ENCODE measurements at regions of chr3 and their contacts with region 1.

Region 1: DNA sequence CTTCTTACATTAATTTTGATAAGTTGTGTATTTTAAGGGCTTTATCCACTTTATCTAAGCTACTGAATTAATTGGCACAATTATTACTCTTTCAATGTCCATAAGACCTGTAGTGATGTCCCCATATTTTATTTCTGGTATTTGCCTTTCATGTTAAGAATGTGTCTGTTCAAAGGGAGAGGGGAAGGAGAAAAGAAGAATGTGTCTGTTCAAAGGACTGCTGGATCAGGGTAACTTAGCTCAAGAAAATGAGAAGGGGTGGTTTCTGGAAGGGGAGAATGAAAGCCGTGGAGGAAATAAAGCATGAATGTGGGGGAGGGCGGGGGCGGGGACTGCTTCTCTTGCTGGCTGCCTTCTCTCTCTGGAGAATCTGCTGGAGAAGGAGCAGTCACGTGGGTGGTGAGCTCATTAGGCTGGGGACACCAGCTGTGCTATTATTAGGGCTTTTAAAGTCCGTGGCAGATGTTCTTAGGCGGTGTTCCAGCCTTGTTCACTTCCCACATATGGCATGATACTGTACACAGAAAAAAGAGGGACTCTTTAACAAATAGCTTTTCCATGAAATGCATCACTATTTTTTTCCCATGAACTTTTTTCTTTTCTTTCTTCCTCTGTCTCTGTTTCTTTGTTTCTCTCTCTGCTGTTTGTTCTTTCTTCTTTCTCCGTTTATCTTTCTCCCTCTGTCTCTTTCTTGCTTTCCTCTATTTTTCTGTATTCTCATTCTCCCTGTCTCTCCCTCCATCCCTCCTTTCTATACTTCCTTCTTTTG is 63.7 kb upstream of the ULK4 start:
- DNase-seq: peak; percentile 85 to 96 (median 95)
- ATAC-seq: peak; percentile 98
- H3K4me3 ChIP-seq: peak overlapping the region in 8 of 12 donors; percentile 1 to 40 (median 22)
- H3K27ac ChIP-seq: peak overlapping the region; percentile 59 to 94 (median 88)
- H3K4me1 ChIP-seq: peaks cover 16 to 89% (median 70%) of the 10 kb centered on the region in 12 donors
- H3K27me3 ChIP-seq: no peaks in the 10 kb centered on the region
- CTCF ChIP-seq: no peak
- POLR2A ChIP-seq: no peak

Region 2: DNA sequence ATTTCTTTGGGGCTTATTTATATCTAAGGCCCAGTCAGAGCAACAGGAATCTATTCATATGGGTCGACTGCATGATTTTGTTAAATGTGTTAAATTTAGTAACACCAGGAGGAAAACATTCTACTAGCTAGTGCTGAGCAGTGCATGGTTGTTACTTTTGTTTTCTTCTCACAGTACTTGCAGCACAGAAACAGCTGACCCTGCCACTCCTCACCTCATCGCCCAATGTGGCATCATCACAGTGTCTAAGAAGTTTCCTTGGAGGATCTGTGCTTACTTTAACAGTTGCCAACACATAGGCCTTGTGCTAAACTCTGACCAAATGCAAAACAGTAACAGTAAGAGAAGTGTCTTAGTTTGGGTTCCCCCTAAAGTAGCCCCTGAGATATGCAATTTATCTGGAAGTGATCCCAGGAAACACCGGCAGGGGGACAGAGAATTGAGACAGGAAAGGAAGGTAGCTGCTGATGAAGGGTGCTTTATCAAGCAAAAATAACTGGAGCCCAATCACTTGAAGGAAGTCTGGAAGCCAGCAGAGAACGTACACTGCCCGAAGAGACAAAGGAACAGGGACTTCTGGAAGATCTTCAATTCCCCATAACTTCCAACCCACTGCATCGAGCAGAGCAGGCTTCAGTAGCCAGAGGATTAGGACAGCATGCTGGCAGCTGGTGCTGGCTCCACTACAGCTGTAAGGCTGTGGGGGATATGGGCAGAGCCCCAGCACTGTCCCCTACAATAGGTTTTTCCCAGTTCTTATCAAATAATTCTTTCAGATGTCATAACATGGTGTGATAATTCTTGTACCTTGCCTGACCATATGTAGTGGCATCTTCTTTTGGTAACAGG is 27.6 kb before region 1 on chr3:
- intact Hi-C with region 1: no loop called
- DNase-seq: no peak
- ATAC-seq: peak in 3 of 4 donors; percentile 27 to 53 (median 52)
- H3K4me3 ChIP-seq: no peak overlapping the region
- H3K27ac ChIP-seq: peak overlapping the region in 3 of 12 donors; percentile 1 to 22 (median 19)
- H3K4me1 ChIP-seq: peaks cover 0 to 14% (median 9%) of the 10 kb centered on the region in 12 donors
- H3K27me3 ChIP-seq: no peaks in the 10 kb centered on the region
- CTCF ChIP-seq: peak; percentile 21 to 61 (median 46)
- POLR2A ChIP-seq: no peak

Region 3: GRCh38 chr3:42061713-42062408 is 36.3 kb after region 1 on chr3:
- intact Hi-C with region 1: loop called in 5 of 10 experiments (anchors 5 kb)
- DNase-seq: peak; percentile 85 to 92 (median 91)
- ATAC-seq: peak; percentile 91 to 93 (median 91)
- H3K4me3 ChIP-seq: peak overlapping the region in 8 of 12 donors; percentile 7 to 35 (median 17)
- H3K27ac ChIP-seq: peak overlapping the region; percentile 84 to 94 (median 89)
- H3K4me1 ChIP-seq: peaks cover 22 to 99% (median 90%) of the 10 kb centered on the region in 12 donors
- H3K27me3 ChIP-seq: no peaks in the 10 kb centered on the region
- CTCF ChIP-seq: no peak
- POLR2A ChIP-seq: peak in 1 of 2 donors; percentile 61